Activated CD4-positive, alpha-beta T cell treated with anti-CD3 and anti-CD28 coated beads, Interleukin-2, amount 10 ng/mL, durations not matched to agents 24 days and 14 days (primary cell): ENCODE measurements at regions of chr7 and their contacts with region 1.

Region 1: GRCh38 chr7:22640269-22640668 is 86.7 kb upstream of the IL6 start:
- DNase-seq: peak; percentile 74
- H3K4me3 Mint-ChIP-seq: no peak overlapping the region
- H3K27ac Mint-ChIP-seq: no peak overlapping the region
- H3K4me1 Mint-ChIP-seq: peaks cover 10% of the 10 kb centered on the region
- H3K27me3 Mint-ChIP-seq: peaks cover 30% of the 10 kb centered on the region

Region 2: DNA sequence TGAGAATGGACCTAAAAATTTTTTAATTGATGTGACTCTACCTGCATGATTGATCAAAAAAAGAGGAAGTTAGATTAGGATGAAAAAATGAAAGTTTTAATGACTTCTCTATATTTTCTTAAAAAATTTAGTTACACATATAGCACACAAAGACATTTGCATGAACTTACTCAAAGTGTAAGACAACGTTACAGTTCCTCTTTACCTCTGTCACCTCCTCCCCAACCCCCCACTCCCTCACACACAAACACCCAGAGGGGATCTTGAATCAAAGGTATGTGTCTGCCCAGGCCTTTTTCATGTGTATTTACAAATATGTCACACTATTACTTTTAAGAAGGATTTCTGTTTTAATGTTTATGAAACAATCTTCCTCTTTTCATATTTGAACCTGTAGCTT is 674.0 kb before region 1 on chr7:
- intact Hi-C with region 1: no loop called
- DNase-seq: no peak
- H3K4me3 Mint-ChIP-seq: no peak overlapping the region
- H3K27ac Mint-ChIP-seq: no peak overlapping the region
- H3K4me1 Mint-ChIP-seq: peaks cover 4% of the 10 kb centered on the region
- H3K27me3 Mint-ChIP-seq: peaks cover 4% of the 10 kb centered on the region

Region 3: DNA sequence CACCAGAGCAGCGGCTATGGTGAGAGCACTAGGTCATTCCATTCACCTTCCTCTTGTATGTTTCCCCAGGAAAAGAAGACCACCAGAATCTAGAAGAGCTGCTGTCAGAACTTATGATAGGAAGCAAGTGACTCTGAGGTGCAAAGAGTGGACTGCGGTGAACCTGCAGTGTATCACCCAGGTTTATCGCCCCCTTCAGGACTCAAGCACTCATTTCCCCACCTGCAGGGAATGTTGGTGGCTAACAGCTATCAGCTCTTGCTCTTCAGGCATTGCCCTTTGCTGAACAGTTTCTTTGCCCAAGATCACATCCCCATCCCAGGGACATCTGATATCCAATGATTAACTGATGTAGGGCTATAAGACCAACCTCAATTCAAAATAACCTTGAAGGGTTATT is 20.5 kb after region 1 on chr7:
- intact Hi-C with region 1: loop called (anchors 1 kb)
- DNase-seq: no peak
- H3K4me3 Mint-ChIP-seq: no peak overlapping the region
- H3K27ac Mint-ChIP-seq: no peak overlapping the region
- H3K4me1 Mint-ChIP-seq: peaks cover 22% of the 10 kb centered on the region
- H3K27me3 Mint-ChIP-seq: peaks cover 39% of the 10 kb centered on the region

Region 4: GRCh38 chr7:22726345-22727185 is 86.3 kb after region 1 on chr7:
- intact Hi-C with region 1: loop called (anchors 5 kb)
- DNase-seq: peak; percentile 87
- H3K4me3 Mint-ChIP-seq: peak overlapping the region; percentile 68
- H3K27ac Mint-ChIP-seq: peak overlapping the region; percentile 19
- H3K4me1 Mint-ChIP-seq: peaks cover 32% of the 10 kb centered on the region
- H3K27me3 Mint-ChIP-seq: peaks cover 30% of the 10 kb centered on the region

Region 5: GRCh38 chr7:22980422-22980821 is 340.2 kb after region 1 on chr7:
- intact Hi-C with region 1: no loop called
- DNase-seq: no peak
- H3K4me3 Mint-ChIP-seq: no peak overlapping the region
- H3K27ac Mint-ChIP-seq: no peak overlapping the region
- H3K4me1 Mint-ChIP-seq: peaks cover 8% of the 10 kb centered on the region
- H3K27me3 Mint-ChIP-seq: no peaks in the 10 kb centered on the region